ENCODE measurements at regions of chr6 and their contacts with region 1.

Region 1: GRCh38 chr6:116531675-116532570 is 13.6 kb downstream of the TRAPPC3L start:
- DNase-seq: peak; percentile 79
- H3K4me3 Mint-ChIP-seq: no peak overlapping the region
- H3K27ac Mint-ChIP-seq: no peak overlapping the region
- H3K4me1 Mint-ChIP-seq: no peaks in the 10 kb centered on the region
- H3K27me3 Mint-ChIP-seq: peaks cover 11% of the 10 kb centered on the region

Region 2: DNA sequence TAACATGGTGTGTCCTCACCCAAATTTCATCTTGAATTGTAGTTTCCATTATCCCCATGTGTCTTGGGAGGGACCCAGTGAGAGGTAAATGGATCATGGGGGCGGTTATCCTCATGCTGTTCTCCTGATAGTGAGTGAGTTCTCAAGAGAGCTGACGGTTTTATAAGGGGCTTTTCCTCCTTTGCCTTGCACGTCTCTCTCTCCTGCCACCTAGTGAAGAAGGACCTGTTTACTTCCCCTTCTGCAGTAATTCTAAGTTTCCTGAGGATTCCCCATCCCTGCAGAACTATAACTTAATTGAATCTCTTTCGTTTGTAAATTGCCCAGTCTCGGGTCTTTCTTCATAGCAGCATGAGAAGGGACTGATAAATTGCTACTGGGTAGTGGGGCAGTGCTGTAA is 1260.5 kb before region 1 on chr6:
- CTCF ChIA-PET with region 1: no interaction called
- intact Hi-C with region 1: no loop called
- DNase-seq: no peak
- H3K4me3 Mint-ChIP-seq: no peak overlapping the region
- H3K27ac Mint-ChIP-seq: no peak overlapping the region
- H3K4me1 Mint-ChIP-seq: no peaks in the 10 kb centered on the region
- H3K27me3 Mint-ChIP-seq: no peaks in the 10 kb centered on the region

Region 3: GRCh38 chr6:116268589-116269293 is 263.2 kb before region 1 on chr6:
- CTCF ChIA-PET with region 1: interaction called, 17 read pairs
- intact Hi-C with region 1: loop called (anchors 1 kb)
- DNase-seq: no peak
- H3K4me3 Mint-ChIP-seq: no peak overlapping the region
- H3K27ac Mint-ChIP-seq: no peak overlapping the region
- H3K4me1 Mint-ChIP-seq: peaks cover 27% of the 10 kb centered on the region
- H3K27me3 Mint-ChIP-seq: no peaks in the 10 kb centered on the region

Region 4: GRCh38 chr6:116444092-116444491 is 87.8 kb before region 1 on chr6:
- CTCF ChIA-PET with region 1: interaction called, 8 read pairs
- intact Hi-C with region 1: loop called (anchors 1 kb)
- DNase-seq: no peak
- H3K4me3 Mint-ChIP-seq: no peak overlapping the region
- H3K27ac Mint-ChIP-seq: no peak overlapping the region
- H3K4me1 Mint-ChIP-seq: peaks cover 2% of the 10 kb centered on the region
- H3K27me3 Mint-ChIP-seq: peaks cover 16% of the 10 kb centered on the region

Region 5: DNA sequence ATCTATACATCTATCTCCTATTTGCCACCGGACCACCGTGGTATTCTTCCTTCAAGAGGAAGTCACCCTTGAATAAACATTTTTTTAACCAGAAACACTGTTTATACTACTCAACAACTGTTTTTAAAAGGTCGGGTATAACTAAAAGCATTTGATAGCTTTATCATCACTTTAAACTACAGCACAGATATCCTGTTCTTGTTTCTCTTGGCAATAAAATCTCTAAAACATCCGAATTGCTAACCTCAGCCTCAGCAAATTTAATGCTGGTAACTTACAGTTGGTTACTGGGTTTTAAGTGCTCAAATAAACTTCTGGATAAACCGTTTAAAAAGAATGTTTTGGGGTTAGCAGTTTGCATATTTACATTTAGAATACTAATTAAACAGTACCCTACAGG is 116.2 kb after region 1 on chr6:
- CTCF ChIA-PET with region 1: interaction called, 4 read pairs
- intact Hi-C with region 1: loop called (anchors 1 kb)
- DNase-seq: no peak
- H3K4me3 Mint-ChIP-seq: no peak overlapping the region
- H3K27ac Mint-ChIP-seq: no peak overlapping the region
- H3K4me1 Mint-ChIP-seq: peaks cover 7% of the 10 kb centered on the region
- H3K27me3 Mint-ChIP-seq: no peaks in the 10 kb centered on the region

Region 6: DNA sequence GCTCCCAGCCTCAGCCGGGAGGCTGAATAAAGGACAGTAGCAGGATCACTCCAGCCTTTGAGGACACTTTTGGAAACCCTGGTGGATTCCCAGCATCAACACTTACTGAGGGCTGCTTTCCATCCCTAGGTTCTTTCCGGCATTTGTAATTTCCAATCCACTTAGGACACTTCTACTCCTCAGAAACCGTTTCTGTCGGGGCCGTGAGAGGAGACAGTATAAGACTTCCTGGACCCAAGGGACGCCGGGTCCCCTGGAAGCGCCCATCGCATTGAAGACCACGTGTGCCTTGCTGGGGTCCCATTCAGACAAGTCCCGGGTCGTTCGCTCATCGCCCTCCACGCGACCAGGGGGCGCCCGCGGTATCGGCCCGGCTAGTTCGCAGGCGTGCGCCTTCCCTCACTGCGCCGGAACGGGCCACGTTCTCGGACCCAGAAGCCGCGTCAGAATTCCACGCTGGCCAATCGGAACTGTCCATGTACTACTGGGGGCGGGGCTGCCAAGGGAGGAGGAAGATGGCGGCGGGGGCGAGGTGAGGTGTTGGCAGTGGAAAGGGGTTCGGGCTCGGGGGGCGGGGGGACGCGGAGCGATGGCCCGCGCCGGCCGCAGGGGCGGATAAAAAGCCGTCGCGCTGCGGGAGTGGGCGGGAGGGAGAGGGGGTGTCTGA is 1143.2 kb after region 1 on chr6 and contains the start of gene NUS1:
- CTCF ChIA-PET with region 1: no interaction called
- intact Hi-C with region 1: no loop called
- DNase-seq: peak; percentile 98
- H3K4me3 Mint-ChIP-seq: peak within 1 kb of the TSS; percentile 94
- H3K27ac Mint-ChIP-seq: peak within 1 kb of the TSS; percentile 93
- H3K4me1 Mint-ChIP-seq: peaks cover 46% of the 10 kb centered on the region
- H3K27me3 Mint-ChIP-seq: no peaks in the 10 kb centered on the region
- total RNA-seq, gene NUS1: 24.0 to 24.1 TPM